Activated CD4-positive, alpha-beta T cell treated with anti-CD3 and anti-CD28 coated beads, Interleukin-2, amount 10 ng/mL, durations not matched to agents 24 days and 14 days (primary cell): ENCODE measurements at regions of chr19 and their contacts with region 1.

Region 1: GRCh38 chr19:38899447-38900219 is at the starts of genes NFKBIB and SIRT2:
- DNase-seq: peak; percentile 100
- H3K4me3 Mint-ChIP-seq: peak within 1 kb of the TSS; percentile 93
- H3K27ac Mint-ChIP-seq: peak within 1 kb of the TSS; percentile 95
- H3K4me1 Mint-ChIP-seq: peaks cover 37% of the 10 kb centered on the region
- H3K27me3 Mint-ChIP-seq: no peaks in the 10 kb centered on the region
- total RNA-seq, gene NFKBIB: 89.2 and 89.7 TPM in 2 replicates
- total RNA-seq, gene SIRT2: 23.6 and 30.1 TPM in 2 replicates

Region 2: GRCh38 chr19:38849860-38850435 is 49.7 kb before region 1 on chr19 and contains the start of gene HNRNPL:
- intact Hi-C with region 1: loop called (anchors 1 kb)
- DNase-seq: peak; percentile 100
- H3K4me3 Mint-ChIP-seq: peak within 1 kb of the TSS; percentile 98
- H3K27ac Mint-ChIP-seq: peak within 1 kb of the TSS; percentile 100
- H3K4me1 Mint-ChIP-seq: peaks cover 39% of the 10 kb centered on the region
- H3K27me3 Mint-ChIP-seq: no peaks in the 10 kb centered on the region
- total RNA-seq, gene HNRNPL: 686 and 695 TPM in 2 replicates

Region 3: DNA sequence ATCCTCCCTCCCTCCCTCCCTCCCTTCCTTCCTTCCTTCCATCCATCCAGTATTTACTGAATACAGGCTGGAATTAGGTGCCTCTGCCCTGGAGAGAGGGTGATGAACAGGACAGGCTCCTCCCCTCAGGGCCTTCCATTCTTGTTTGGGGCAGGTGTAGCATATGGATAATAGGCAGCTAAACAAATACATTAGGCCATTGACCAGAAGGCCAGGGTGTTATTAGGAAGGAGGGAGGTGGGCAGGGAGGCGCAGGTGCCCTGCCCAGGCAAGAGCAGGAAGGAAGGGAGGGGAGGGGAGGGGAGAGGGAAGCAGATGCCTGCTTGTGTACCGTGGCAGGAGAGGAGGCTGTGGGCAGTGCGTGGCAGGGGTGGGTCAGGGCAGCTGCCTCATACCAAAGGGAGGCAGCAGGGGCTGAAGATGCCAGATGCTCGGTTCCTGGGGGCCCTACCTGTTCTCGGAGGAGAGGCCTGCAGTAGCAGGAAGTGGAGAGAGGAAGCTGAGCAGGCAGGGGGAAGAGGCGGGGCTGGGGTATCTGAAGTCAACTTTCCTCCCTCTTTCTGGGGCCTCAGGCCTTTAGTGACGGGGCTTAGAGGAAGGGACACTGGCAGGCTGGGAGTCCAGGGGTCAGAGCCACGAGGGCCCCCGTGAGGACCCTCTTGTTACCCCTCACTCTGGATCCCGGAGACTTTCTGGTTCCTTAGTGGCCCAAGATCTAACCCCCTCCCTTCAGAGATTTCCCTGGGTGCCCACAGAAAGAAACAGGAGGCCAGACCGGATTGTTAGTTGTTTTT is 21.7 kb before region 1 on chr19 and contains the start of gene RINL:
- intact Hi-C with region 1: loop called (anchors 1 kb)
- DNase-seq: peak; percentile 90
- H3K4me3 Mint-ChIP-seq: peak within 1 kb of the TSS; percentile 97
- H3K27ac Mint-ChIP-seq: peak within 1 kb of the TSS; percentile 96
- H3K4me1 Mint-ChIP-seq: peaks cover 28% of the 10 kb centered on the region
- H3K27me3 Mint-ChIP-seq: no peaks in the 10 kb centered on the region
- total RNA-seq, gene RINL: 62.7 and 68.9 TPM in 2 replicates

Region 4: GRCh38 chr19:38989066-38989605 is 89.5 kb after region 1 on chr19:
- intact Hi-C with region 1: no loop called
- DNase-seq: no peak
- H3K4me3 Mint-ChIP-seq: no peak overlapping the region
- H3K27ac Mint-ChIP-seq: no peak overlapping the region
- H3K4me1 Mint-ChIP-seq: no peaks in the 10 kb centered on the region
- H3K27me3 Mint-ChIP-seq: peaks cover 3% of the 10 kb centered on the region